ENCODE measurements at regions of chr10 and their contacts with region 1.

Region 1: GRCh38 chr10:59625721-59626522 is 83.7 kb downstream of the SLC16A9 start:
- DNase-seq: no peak
- H3K4me3 ChIP-seq: no peak overlapping the region
- H3K27ac ChIP-seq: no peak overlapping the region
- H3K4me1 ChIP-seq: no peaks in the 10 kb centered on the region
- H3K27me3 ChIP-seq: no peaks in the 10 kb centered on the region
- CTCF ChIP-seq: peak; percentile 68 to 88

Region 2: GRCh38 chr10:59240582-59241183 is 385.2 kb before region 1 on chr10:
- intact Hi-C with region 1: loop called (anchors 2 kb)
- DNase-seq: no peak
- H3K4me3 ChIP-seq: no peak overlapping the region
- H3K27ac ChIP-seq: no peak overlapping the region
- H3K4me1 ChIP-seq: peaks cover 0 to 6% (median 0%) of the 10 kb centered on the region in 4 donors
- H3K27me3 ChIP-seq: no peaks in the 10 kb centered on the region
- CTCF ChIP-seq: peak; percentile 61 to 91

Region 3: GRCh38 chr10:59668096-59668495 is 42.2 kb after region 1 on chr10:
- intact Hi-C with region 1: no loop called
- DNase-seq: no peak
- H3K4me3 ChIP-seq: no peak overlapping the region
- H3K27ac ChIP-seq: no peak overlapping the region
- H3K4me1 ChIP-seq: no peaks in the 10 kb centered on the region
- H3K27me3 ChIP-seq: no peaks in the 10 kb centered on the region
- CTCF ChIP-seq: no peak

Region 4: GRCh38 chr10:59830601-59831259 is 204.8 kb after region 1 on chr10:
- intact Hi-C with region 1: loop called (anchors 10 kb)
- DNase-seq: peak in 1 of 2 donors; percentile 32
- H3K4me3 ChIP-seq: no peak overlapping the region
- H3K27ac ChIP-seq: no peak overlapping the region
- H3K4me1 ChIP-seq: peaks cover 0 to 61% (median 22%) of the 10 kb centered on the region in 4 donors
- H3K27me3 ChIP-seq: no peaks in the 10 kb centered on the region
- CTCF ChIP-seq: peak; percentile 58 to 67

Region 5: GRCh38 chr10:60048091-60048501 is 422.2 kb after region 1 on chr10:
- intact Hi-C with region 1: loop called (anchors 5 kb)
- DNase-seq: no peak
- H3K4me3 ChIP-seq: no peak overlapping the region
- H3K27ac ChIP-seq: no peak overlapping the region
- H3K4me1 ChIP-seq: peaks cover 0 to 35% (median 18%) of the 10 kb centered on the region in 4 donors
- H3K27me3 ChIP-seq: no peaks in the 10 kb centered on the region
- CTCF ChIP-seq: peak; percentile 29 to 42

Region 6: GRCh38 chr10:60208676-60209269 is 582.9 kb after region 1 on chr10:
- intact Hi-C with region 1: loop called (anchors 10 kb)
- DNase-seq: no peak
- H3K4me3 ChIP-seq: no peak overlapping the region
- H3K27ac ChIP-seq: no peak overlapping the region
- H3K4me1 ChIP-seq: peaks cover 0 to 3% (median 0%) of the 10 kb centered on the region in 4 donors
- H3K27me3 ChIP-seq: no peaks in the 10 kb centered on the region
- CTCF ChIP-seq: peak; percentile 77 to 89

Measured in tibial artery (tissue), 4 donors.